Naive thymus-derived CD4-positive, alpha-beta T cell (primary cell): ENCODE measurements at regions of chr6 and their contacts with region 1.

Region 1: DNA sequence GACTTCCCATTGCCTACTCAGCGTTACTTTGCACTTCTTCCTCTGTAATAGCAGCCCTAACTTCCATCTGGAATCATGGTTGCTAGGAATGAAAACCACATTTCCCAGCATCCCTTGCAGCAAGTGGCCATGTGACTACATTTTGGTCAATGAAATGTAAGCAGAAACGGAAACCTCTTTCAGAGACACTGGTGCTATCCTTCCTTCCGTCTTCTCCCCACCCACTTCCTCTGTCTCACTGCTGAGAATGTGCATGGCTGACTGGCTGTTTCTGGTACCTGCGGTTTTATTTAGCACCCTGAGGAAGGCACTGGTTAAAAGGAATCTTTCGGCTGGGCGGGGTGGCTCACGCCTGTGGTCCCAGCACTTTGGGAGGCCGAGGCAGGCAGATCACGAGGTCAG is 107.4 kb downstream of the SCML4 start:
- DNase-seq: peak; percentile 27 to 89 (median 85)
- ATAC-seq: peak; percentile 95
- H3K4me3 ChIP-seq: no peak overlapping the region
- H3K4me3 Mint-ChIP-seq: peak overlapping the region; percentile 43 to 81 (median 72)
- H3K27ac ChIP-seq: peak overlapping the region; percentile 49
- H3K27ac Mint-ChIP-seq: peak overlapping the region; percentile 82 to 97 (median 92)
- H3K4me1 ChIP-seq: peaks cover 47 to 57% of the 10 kb centered on the region in 2 donors
- H3K4me1 Mint-ChIP-seq: peaks cover 46 to 86% (median 74%) of the 10 kb centered on the region in 7 donors
- H3K27me3 ChIP-seq: no peaks in the 10 kb centered on the region
- H3K27me3 Mint-ChIP-seq: no peaks in the 10 kb centered on the region

Region 2: GRCh38 chr6:107645800-107646575 is 70.7 kb before region 1 on chr6:
- CTCF ChIA-PET with region 1: no interaction called
- POLR2A ChIA-PET with region 1: no interaction called
- intact Hi-C with region 1: no loop called
- DNase-seq: no peak
- ATAC-seq: no peak
- H3K4me3 ChIP-seq: no peak overlapping the region
- H3K4me3 Mint-ChIP-seq: no peak overlapping the region
- H3K27ac ChIP-seq: no peak overlapping the region
- H3K27ac Mint-ChIP-seq: no peak overlapping the region
- H3K4me1 ChIP-seq: no peaks in the 10 kb centered on the region
- H3K4me1 Mint-ChIP-seq: peaks cover 0 to under 1% (median 0%) of the 10 kb centered on the region in 7 donors
- H3K27me3 ChIP-seq: no peaks in the 10 kb centered on the region
- H3K27me3 Mint-ChIP-seq: peaks cover 0 to 38% (median 4%) of the 10 kb centered on the region in 5 donors

Region 3: DNA sequence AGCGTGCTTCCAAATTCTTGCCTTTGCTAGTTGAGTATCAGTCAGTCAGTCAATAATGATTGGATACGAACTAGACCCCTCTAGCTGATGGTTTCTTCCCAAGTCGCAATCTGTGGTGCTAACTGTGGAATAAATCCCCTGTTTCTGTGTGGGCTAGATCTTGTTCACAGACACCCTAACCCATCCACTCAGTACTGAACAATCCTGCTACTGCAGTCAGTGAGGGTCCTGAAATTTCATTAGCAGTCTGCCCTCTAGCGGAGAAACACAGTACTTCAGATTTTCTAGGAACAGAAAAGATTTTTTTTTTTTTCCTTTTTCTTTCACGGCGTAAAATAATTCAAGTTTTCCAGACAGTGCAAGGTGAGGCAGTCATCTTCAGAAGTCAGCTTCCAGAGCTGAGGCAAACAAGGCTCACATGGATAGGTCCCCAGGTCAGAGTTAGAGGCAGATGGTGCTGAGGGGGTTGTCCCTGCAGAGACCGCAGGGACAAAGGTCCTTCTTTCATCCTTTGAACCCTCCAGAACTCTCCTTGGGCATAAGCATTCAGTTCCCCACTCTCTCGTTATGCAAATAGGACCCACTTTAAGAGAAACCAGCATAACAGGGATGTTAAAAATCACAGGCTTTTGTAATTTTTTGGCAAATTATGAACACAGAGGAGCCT is 12.2 kb before region 1 on chr6:
- CTCF ChIA-PET with region 1: interaction called, 4 read pairs
- POLR2A ChIA-PET with region 1: interaction called, 4 read pairs
- intact Hi-C with region 1: loop called in 1 of 2 experiments (anchors 1 kb)
- DNase-seq: peak in 3 of 9 donors; percentile 21 to 39 (median 34)
- ATAC-seq: peak; percentile 44
- H3K4me3 ChIP-seq: no peak overlapping the region
- H3K4me3 Mint-ChIP-seq: no peak overlapping the region
- H3K27ac ChIP-seq: peak overlapping the region; percentile 34
- H3K27ac Mint-ChIP-seq: peak overlapping the region in 8 of 9 donors; percentile 52 to 89 (median 74)
- H3K4me1 ChIP-seq: peaks cover 0 to 11% of the 10 kb centered on the region in 2 donors
- H3K4me1 Mint-ChIP-seq: peaks cover 11 to 71% (median 46%) of the 10 kb centered on the region in 7 donors
- H3K27me3 ChIP-seq: no peaks in the 10 kb centered on the region
- H3K27me3 Mint-ChIP-seq: peaks cover 0 to 3% (median 0%) of the 10 kb centered on the region in 5 donors

Region 4: DNA sequence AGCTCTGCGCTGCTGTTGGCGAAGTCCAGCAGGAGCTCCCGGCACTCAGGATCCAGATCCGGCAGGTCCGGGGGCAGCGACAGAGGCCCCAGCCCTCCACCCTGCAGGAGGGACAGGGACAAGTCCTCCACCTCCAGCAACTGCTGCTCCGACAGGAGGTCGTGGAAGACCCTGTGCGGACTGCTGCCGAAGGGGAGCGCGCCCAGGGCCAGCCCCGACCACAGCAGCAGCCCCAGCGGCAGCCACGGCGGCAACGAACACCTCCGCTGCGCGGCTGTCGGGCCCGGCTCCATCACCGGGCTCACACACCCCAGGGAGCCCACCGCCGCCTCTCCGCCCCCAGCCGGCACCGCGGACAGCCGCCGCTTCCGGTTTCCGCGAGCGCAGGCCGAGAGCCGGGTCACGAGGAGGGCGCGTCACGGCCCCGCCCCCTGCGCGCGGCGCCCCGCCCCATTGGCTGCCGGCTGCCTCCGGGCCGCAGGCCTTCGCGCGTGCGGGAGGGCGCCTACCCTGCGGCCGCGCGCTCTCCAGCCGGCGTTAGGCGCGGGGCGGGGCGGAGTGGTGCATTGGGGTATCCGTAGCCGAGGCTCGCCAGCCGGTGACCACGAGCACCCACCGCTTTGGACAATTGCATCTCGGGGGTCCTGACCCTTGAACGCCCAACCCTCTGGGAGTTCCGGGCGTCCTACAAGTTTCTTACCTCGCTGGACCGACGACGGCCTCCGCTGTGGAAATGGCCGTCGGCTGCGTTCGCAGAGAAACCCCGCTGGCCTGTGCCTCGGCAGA is 357.9 kb after region 1 on chr6 and contains the start of gene OSTM1:
- CTCF ChIA-PET with region 1: no interaction called
- POLR2A ChIA-PET with region 1: no interaction called
- intact Hi-C with region 1: loop called in 1 of 2 experiments (anchors 1 kb)
- DNase-seq: peak; percentile 88 to 98 (median 94)
- ATAC-seq: peak; percentile 99
- H3K4me3 ChIP-seq: peak within 1 kb of the TSS; percentile 99
- H3K4me3 Mint-ChIP-seq: peak within 1 kb of the TSS; percentile 84 to 94 (median 90)
- H3K27ac ChIP-seq: peak within 1 kb of the TSS; percentile 89
- H3K27ac Mint-ChIP-seq: peak within 1 kb of the TSS; percentile 81 to 98 (median 91)
- H3K4me1 ChIP-seq: peaks cover 18% of the 10 kb centered on the region in 2 donors
- H3K4me1 Mint-ChIP-seq: peaks cover 11 to 35% (median 23%) of the 10 kb centered on the region in 7 donors
- H3K27me3 ChIP-seq: no peaks in the 10 kb centered on the region
- H3K27me3 Mint-ChIP-seq: peaks cover 0 to 25% (median 4%) of the 10 kb centered on the region in 5 donors
- total RNA-seq, gene OSTM1: 25.0 to 48.9 (median 36.7) TPM